PC-9 (cell line): ENCODE measurements at regions of chr1 and their contacts with region 1.

Region 1: GRCh38 chr1:29271724-29272123 is 35.4 kb downstream of the PTPRU start:
- DNase-seq: peak; percentile 83 to 84
- H3K4me3 ChIP-seq: no peak overlapping the region
- H3K27ac ChIP-seq: peak overlapping the region; percentile 58
- H3K4me1 ChIP-seq: peaks cover 24% of the 10 kb centered on the region
- H3K27me3 ChIP-seq: no peaks in the 10 kb centered on the region
- CTCF ChIP-seq: no peak

Region 2: GRCh38 chr1:28378906-28379305 is 892.8 kb before region 1 on chr1:
- CTCF ChIA-PET with region 1: no interaction called
- POLR2A ChIA-PET with region 1: no interaction called
- intact Hi-C with region 1: no loop called
- DNase-seq: no peak
- H3K4me3 ChIP-seq: no peak overlapping the region
- H3K27ac ChIP-seq: no peak overlapping the region
- H3K4me1 ChIP-seq: no peaks in the 10 kb centered on the region
- H3K27me3 ChIP-seq: no peaks in the 10 kb centered on the region
- CTCF ChIP-seq: no peak

Region 3: GRCh38 chr1:29245876-29246275 is 25.8 kb before region 1 on chr1:
- CTCF ChIA-PET with region 1: no interaction called
- POLR2A ChIA-PET with region 1: no interaction called
- intact Hi-C with region 1: loop called (anchors 1 kb)
- DNase-seq: peak in 1 of 2 experiments; percentile 35
- H3K4me3 ChIP-seq: no peak overlapping the region
- H3K27ac ChIP-seq: no peak overlapping the region
- H3K4me1 ChIP-seq: peaks cover 32% of the 10 kb centered on the region
- H3K27me3 ChIP-seq: no peaks in the 10 kb centered on the region
- CTCF ChIP-seq: peak; percentile 43; the same call in 1 of the 2 replicates

Region 4: DNA sequence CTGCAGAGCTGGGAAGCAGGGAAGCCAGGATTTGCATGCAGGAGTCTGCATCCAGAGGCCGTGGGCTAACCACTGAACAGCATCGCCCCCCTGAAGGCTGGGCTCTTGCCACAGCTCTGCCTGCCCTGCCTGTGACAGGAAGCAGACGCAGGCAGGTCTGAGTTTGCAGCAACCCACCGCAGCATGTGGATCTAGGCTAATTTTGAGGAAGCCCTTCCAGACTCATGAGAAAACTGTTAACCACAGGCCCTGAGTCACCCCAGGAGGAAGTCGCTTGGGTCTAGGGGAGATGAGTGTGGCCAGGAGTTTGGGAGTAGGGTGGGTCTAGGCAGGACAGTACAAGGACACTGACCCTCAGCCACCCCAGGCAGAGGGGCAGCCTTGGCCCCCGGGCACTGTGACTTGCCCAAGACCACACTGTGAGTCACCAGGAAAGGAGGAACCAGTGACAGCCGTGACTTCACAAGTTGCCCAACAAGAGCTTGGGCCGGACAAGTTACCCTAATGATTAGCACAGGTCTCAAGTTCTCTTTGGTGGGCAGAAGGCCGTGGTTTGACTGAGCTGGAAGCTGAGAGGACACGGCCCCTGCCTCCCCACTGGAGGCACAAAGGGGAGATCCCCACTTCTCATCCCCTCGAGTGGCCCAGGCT is 1484.9 kb after region 1 on chr1:
- CTCF ChIA-PET with region 1: interaction called, 15 read pairs
- POLR2A ChIA-PET with region 1: no interaction called
- intact Hi-C with region 1: no loop called
- DNase-seq: peak; percentile 84 to 93
- H3K4me3 ChIP-seq: peak overlapping the region; percentile 40; the same call in 1 of the 2 replicates
- H3K27ac ChIP-seq: peak overlapping the region; percentile 75
- H3K4me1 ChIP-seq: peaks cover 65% of the 10 kb centered on the region
- H3K27me3 ChIP-seq: no peaks in the 10 kb centered on the region
- CTCF ChIP-seq: no peak